HepG2 (cell line): ENCODE measurements at regions of chr7 and their contacts with region 1.

Region 1: GRCh38 chr7:100148559-100149350 is at the start of gene LAMTOR4:
- DNase-seq: peak; percentile 98
- ATAC-seq: peak; percentile 98
- H3K4me3 ChIP-seq: peak within 1 kb of the TSS; percentile 96 to 97 (median 97)
- H3K27ac ChIP-seq: peak within 1 kb of the TSS; percentile 46
- H3K4me1 ChIP-seq: peaks cover 45% of the 10 kb centered on the region
- H3K27me3 ChIP-seq: no peaks in the 10 kb centered on the region
- CTCF ChIP-seq: no peak
- EP300 ChIP-seq: no peak; a peak in 1 of 4 replicates
- POLR2A ChIP-seq: peak in 1 of 2 experiments; percentile 92
- RAD21 ChIP-seq: no peak
- total RNA-seq, gene LAMTOR4: 115 and 120 TPM in 2 replicates

Region 2: DNA sequence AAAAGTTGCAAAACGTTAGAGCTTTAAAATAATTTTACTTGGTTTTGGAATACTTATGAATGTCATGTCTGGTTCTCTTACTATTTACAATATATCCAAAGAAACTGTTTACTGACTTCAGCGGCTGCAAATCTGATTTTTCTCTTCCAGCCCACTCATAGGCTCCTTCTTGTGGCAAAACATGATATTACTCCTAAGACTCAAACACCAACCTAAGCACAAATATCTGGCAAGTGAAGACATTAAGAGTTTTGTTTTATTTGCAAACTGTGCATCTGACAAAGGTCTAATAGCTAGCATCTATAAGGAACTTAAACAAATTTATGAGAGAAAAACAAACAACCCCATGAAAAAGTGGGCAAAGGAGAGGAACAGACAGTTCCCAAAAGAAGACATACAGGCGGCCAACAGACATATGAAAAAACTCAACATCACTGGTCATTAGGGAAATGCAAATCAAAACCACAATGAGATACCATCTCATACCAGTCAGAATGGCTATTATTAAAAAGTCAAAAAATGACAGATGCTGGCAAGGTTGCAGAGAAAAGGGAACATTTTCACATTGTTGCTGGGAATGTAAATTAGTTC is 199.0 kb before region 1 on chr7:
- CTCF ChIA-PET with region 1: no interaction called
- POLR2A ChIA-PET with region 1: no interaction called
- in situ Hi-C with region 1: no loop called
- intact Hi-C with region 1: no loop called
- DNase-seq: peak; percentile 21
- ATAC-seq: no peak
- H3K4me3 ChIP-seq: no peak overlapping the region
- H3K27ac ChIP-seq: no peak overlapping the region
- H3K4me1 ChIP-seq: peaks cover 7% of the 10 kb centered on the region; the same call in 1 of the 2 replicates
- H3K27me3 ChIP-seq: no peaks in the 10 kb centered on the region
- CTCF ChIP-seq: peak; percentile 47
- EP300 ChIP-seq: no peak
- POLR2A ChIP-seq: no peak
- RAD21 ChIP-seq: no peak

Region 3: DNA sequence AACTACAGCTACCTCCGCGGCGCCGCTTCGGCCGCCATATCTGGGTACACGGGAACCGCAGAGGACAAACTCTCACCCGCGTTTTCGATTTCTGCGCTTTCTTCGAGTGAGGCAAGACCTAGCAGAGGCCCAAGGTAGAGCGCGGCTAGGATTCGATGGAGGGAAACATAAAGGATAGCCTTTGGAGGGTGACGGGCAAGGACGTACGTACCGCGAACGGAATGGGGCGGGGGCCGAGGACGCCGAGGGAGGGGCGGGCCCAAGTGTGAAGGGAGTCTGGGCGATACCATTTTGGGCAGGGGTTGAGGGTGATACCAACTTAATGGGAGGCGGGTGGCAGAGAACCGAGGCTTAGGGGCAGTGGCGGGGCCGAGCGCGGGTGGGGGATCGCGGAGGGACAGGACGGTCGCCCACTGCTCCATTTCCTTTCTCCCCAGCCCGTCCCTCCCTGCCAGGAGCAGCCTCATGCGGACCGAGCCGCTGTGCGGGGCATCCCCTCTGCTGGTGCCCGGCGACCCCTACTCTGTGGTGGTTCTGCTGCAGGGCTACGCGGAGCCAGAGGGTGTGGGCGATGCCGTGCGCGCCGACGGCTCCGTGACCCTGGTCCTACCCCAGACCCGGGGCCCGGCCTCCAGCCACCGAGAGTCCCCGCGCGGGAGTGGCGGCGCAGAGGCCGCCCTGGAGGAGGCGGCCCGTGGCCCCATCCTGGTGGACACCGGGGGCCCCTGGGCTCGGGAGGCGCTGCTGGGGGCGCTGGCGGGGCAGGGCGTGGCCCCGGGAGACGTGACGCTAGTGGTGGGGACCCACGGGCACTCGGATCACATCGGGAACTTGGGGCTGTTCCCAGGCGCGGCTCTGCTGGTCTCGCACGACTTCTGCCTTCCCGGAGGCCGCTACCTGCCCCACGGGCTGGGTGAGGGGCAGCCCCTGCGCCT is 21.6 kb before region 1 on chr7 and contains the start of gene MBLAC1:
- CTCF ChIA-PET with region 1: no interaction called
- POLR2A ChIA-PET with region 1: interaction called, 11 read pairs
- in situ Hi-C with region 1: no loop called
- intact Hi-C with region 1: no loop called
- DNase-seq: peak; percentile 79
- ATAC-seq: peak; percentile 56
- H3K4me3 ChIP-seq: peak within 1 kb of the TSS; percentile 74 to 92 (median 84)
- H3K27ac ChIP-seq: peak within 1 kb of the TSS; percentile 96
- H3K4me1 ChIP-seq: peaks cover 55% of the 10 kb centered on the region
- H3K27me3 ChIP-seq: no peaks in the 10 kb centered on the region
- CTCF ChIP-seq: 0 out of 2 replicates have a peak, but pooled peaks have one; percentile 7
- EP300 ChIP-seq: no peak
- POLR2A ChIP-seq: peak in 1 of 2 experiments; percentile 78; a peak in 2 of 4 replicates
- RAD21 ChIP-seq: no peak
- total RNA-seq, gene MBLAC1: 1.8 and 2.1 TPM in 2 replicates

Region 4: GRCh38 chr7:100167921-100168323 is 19.2 kb after region 1 on chr7:
- CTCF ChIA-PET with region 1: no interaction called
- POLR2A ChIA-PET with region 1: interaction called, 10 read pairs
- in situ Hi-C with region 1: no loop called
- intact Hi-C with region 1: no loop called
- DNase-seq: no peak
- ATAC-seq: no peak
- H3K4me3 ChIP-seq: peak overlapping the region; percentile 26 to 69 (median 31)
- H3K27ac ChIP-seq: no peak overlapping the region
- H3K4me1 ChIP-seq: peaks cover 57% of the 10 kb centered on the region
- H3K27me3 ChIP-seq: peaks cover 4 to 47% of the 10 kb centered on the region in 2 experiments
- CTCF ChIP-seq: no peak
- EP300 ChIP-seq: no peak
- POLR2A ChIP-seq: no peak
- RAD21 ChIP-seq: no peak

Region 5: DNA sequence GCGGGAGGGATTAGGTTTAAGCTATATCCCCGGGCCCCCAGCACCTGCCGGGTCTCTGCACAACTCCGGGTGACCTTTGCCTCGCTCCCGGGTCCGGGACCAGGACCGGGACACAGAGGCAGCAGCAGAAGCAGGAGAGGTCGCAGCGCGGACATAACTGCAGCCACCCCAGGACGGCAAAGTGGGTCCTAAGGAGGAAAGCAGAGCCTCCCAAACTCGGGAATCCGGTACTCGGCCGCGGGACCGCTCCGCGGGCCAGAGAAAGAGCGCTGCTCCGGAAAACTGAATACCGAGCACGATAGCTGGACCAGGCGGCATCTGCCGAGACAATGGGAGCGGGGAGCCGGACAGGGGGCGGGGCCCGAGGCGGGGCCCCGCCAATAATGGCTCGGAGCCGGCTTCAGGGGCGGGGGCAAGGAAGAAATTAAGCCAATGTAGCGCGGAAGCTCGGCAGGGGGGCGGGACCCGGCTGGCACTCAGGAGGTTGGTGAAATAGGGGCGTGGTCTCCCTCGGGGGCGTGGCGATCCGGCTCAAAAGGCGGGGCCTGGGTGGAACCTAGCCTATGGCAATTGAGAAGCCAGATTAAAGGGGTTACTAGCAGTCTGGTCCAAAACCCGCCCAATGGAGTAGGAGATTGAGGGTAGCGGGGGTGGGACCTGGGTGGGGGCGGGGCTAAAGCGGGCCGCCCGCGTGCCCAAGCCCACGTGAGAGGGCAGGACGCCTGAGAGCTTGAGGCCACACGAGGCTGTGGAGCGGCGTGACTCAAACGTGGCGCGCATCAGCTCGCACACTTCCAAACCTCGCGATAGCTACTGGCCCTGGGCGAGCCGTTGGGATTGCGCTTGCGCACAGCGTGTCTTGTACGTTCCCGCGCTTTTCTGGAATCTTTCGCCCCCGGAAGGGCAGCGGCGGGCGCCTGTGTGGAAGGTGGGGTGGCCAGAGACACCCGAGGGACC is 28.6 kb after region 1 on chr7 and contains the starts of genes GPC2 and STAG3:
- CTCF ChIA-PET with region 1: no interaction called
- POLR2A ChIA-PET with region 1: interaction called, 11 read pairs
- in situ Hi-C with region 1: no loop called
- intact Hi-C with region 1: no loop called
- DNase-seq: peak; percentile 85
- ATAC-seq: peak; percentile 89
- H3K4me3 ChIP-seq: peak within 1 kb of the TSS; percentile 68 to 80 (median 69)
- H3K27ac ChIP-seq: no peak within 1 kb of the TSS
- H3K4me1 ChIP-seq: peaks cover 13% of the 10 kb centered on the region
- H3K27me3 ChIP-seq: peaks cover 1 to 4% of the 10 kb centered on the region in 2 experiments; a peak in 2 of 5 replicates
- CTCF ChIP-seq: no peak
- EP300 ChIP-seq: no peak
- POLR2A ChIP-seq: no peak
- RAD21 ChIP-seq: no peak
- total RNA-seq, gene GPC2: 0.10 and 0.64 TPM in 2 replicates
- total RNA-seq, gene STAG3: 0.22 and 0.33 TPM in 2 replicates